ENCODE measurements at regions of chr3 and their contacts with region 1.

Region 1: DNA sequence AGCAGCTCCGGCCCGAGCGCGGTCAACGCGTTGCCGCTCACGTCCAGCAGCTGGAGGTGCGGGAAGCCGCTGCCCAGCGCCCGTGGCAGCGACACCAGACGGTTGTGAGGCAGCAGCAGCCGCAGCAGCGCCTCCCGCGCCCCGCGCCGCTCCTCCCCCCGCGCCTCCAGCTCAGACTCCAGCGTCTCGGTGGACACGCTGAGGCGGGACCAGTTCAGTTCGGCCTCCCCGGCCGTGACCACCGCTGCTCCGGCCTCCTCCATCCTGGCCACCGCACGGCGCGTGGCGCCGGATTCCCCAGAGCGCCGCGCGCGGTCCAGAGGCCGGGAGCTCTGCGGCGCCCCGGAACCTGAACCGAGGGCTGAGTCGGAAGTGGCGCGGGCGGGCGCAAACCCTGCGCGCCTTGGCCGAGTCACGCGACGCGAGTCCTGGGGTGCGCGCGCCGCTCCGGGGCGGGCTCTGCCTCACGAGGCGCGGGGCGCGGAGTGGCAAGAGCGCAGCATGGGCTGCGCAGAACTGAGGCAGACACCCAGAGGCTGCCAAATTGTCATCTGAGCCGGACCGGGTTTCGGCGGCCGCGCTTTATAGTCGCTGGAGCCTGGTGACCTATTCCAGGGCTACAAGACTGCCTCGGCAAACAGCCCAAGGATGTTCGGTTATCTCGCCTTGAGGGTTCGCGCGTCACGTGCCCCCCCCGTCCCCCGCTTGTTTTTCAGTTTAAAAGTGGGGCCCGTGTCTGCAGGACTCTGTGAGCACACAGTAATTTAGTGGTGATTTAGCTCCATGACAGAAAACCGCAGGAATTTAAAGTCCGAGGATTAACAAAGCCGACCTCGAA is at the start of gene LRRC58:
- DNase-seq: peak; percentile 87
- H3K4me3 Mint-ChIP-seq: peak within 1 kb of the TSS; percentile 92
- H3K27ac Mint-ChIP-seq: peak within 1 kb of the TSS; percentile 88
- H3K4me1 Mint-ChIP-seq: peaks cover 46% of the 10 kb centered on the region
- H3K27me3 Mint-ChIP-seq: peaks cover 26% of the 10 kb centered on the region
- total RNA-seq, gene LRRC58: 26.9 and 27.4 TPM in 2 replicates

Region 2: DNA sequence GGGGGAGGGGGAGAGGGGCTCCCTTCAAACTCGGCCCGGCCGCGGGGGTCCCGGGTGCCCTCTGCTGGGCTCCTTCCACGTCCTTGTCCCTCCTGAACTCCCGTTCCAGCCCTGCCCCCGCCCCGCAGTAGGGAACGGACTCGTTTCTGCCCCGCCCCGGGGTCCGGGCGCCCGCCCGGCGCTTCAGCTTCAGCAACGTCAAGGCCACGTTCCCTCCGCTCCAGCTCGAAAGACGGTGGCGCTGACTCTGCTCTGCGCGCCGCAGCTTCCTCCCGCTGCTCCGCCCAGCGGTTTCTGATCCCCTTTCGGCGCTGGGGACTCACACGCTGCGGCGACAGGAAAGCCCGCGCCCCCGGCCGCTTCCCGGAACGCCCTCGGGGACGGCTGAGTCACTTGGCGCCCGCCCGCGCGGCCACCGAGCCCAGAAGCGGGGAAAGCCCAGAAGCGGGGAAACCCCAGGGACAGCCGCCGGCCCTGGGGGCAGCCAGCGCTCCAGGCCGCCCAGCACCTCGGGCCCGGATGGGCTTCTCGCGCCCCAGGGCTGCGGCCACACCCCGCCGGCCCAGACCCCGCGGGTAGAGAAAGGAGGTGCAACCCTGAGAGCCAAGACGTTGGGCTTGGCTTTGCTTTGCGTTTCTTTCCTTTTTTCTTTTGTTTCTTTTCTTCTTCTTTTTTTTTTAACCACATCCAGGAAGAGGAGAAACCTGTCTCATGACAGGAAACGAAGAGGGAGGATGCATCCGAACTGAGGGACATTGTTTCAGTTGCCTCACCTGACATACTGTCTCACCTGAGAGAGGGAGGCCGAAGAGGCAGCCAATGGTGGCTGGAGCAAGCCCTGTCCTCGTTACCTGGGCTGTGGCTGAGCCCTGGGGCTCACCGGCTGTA is 1026.1 kb before region 1 on chr3:
- intact Hi-C with region 1: loop called (anchors 2 kb)
- DNase-seq: peak; percentile 92
- H3K4me3 Mint-ChIP-seq: peak overlapping the region; percentile 80
- H3K27ac Mint-ChIP-seq: peak overlapping the region; percentile 92
- H3K4me1 Mint-ChIP-seq: peaks cover 52% of the 10 kb centered on the region
- H3K27me3 Mint-ChIP-seq: peaks cover 27% of the 10 kb centered on the region

Region 3: DNA sequence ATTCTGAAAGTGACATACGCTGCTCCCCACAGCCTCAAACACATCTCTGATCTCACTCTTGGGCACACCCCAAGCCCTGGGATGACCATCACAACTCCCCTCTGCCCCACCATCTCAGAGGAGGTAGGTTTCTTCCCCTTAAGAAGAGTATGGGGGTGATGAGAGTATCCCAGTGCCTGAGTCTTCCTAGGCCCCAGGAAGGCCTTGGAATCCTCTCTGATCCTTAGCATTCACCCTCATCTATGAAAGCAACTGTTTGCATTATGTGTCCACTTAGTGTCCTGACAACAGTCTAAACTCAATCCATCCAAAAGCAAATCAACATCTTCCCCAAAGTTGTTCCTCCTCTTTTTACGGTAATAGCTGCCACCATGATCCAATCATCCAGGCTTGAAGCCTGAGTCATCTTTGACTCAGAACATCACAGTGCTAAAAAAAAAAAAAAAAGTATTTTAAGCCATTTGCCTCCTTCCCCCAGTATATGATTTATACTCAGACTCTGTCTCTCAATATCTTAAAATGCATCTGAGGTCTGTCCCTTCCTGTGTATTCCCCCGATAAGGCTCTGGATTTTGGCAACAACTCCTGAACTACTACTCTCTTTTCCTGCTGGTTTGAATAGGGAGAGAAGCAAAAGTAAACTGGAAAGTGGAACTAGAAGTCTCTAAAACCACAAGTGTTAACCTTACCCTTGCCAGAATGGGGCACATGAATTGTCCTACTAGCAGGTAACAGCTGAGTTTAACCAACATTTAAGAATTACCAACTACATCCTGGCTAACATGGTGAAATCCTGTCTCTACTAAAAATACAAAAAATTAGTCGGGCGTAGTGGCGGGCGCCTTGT is 711.3 kb before region 1 on chr3:
- intact Hi-C with region 1: loop called (anchors 2 kb)
- DNase-seq: no peak
- H3K4me3 Mint-ChIP-seq: peak overlapping the region; percentile 47
- H3K27ac Mint-ChIP-seq: peak overlapping the region; percentile 89
- H3K4me1 Mint-ChIP-seq: peaks cover 45% of the 10 kb centered on the region
- H3K27me3 Mint-ChIP-seq: peaks cover under 1% of the 10 kb centered on the region

Region 4: DNA sequence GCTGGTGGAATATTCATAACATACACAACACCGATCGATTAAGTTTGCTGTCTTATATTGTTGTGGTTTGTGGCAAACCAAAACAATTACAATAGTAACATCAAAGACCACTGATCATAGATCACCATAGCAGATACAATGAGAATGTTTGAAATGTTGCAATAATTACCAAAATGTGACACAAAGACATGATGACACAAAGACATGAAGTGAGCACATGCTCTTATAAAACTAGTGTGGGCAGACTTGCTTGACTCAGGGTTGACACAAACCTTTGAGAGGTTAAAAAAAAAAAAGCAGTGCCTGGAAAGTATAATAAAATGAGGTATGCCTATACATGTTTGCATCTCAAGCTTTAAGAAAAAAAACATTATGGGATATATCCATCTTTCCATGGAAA is 437.0 kb before region 1 on chr3:
- intact Hi-C with region 1: loop called (anchors 2 kb)
- DNase-seq: no peak
- H3K4me3 Mint-ChIP-seq: no peak overlapping the region
- H3K27ac Mint-ChIP-seq: peak overlapping the region; percentile 59
- H3K4me1 Mint-ChIP-seq: peaks cover 21% of the 10 kb centered on the region
- H3K27me3 Mint-ChIP-seq: peaks cover 1% of the 10 kb centered on the region

Region 5: DNA sequence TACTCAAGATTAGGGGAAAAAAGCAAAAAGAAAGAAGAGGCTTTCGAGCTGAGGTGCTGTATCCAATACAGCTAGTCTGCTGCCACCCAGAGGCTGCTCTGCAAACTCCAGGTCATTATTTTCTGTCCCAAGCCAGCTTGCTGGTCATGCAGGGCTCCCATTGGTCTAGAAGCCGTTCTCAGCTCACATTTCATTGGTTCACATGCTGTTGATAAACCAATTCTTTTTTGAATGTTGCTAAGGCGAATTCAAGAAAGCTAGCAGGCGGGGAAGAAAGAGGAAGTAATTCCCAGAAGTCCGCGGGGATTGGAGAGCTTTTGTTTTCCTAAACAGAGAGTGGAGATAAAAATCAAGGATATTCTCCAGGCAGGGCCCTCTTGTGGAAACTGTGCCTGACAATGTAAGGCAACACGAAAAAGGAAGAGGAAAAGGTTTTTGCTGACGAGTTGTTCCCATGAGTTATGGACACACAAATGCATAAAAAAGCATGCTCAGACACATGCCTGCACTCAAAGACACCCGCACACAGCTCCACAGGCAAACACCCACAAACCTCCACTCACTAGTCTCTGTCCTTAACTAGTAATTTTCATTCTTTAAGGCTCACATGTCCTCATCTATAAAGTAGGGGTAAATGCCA is 68.2 kb after region 1 on chr3:
- intact Hi-C with region 1: loop called (anchors 1 kb)
- DNase-seq: peak; percentile 78
- H3K4me3 Mint-ChIP-seq: peak overlapping the region; percentile 84
- H3K27ac Mint-ChIP-seq: no peak overlapping the region
- H3K4me1 Mint-ChIP-seq: peaks cover 22% of the 10 kb centered on the region
- H3K27me3 Mint-ChIP-seq: peaks cover 2% of the 10 kb centered on the region

Region 6: GRCh38 chr3:120742198-120742849 is 393.1 kb after region 1 on chr3 and contains the starts of genes GTF2E1 and RABL3:
- intact Hi-C with region 1: loop called (anchors 1 kb)
- DNase-seq: peak; percentile 95
- H3K4me3 Mint-ChIP-seq: peak within 1 kb of the TSS; percentile 84
- H3K27ac Mint-ChIP-seq: peak within 1 kb of the TSS; percentile 89
- H3K4me1 Mint-ChIP-seq: peaks cover 22% of the 10 kb centered on the region
- H3K27me3 Mint-ChIP-seq: no peaks in the 10 kb centered on the region
- total RNA-seq, gene GTF2E1: 25.3 and 29.2 TPM in 2 replicates
- total RNA-seq, gene RABL3: 24.3 and 25.6 TPM in 2 replicates

Measured in activated T-helper 1 cell treated with anti-CD3 and anti-CD28 coated beads, Interleukin-12 subunit alpha, Interleukin-12 subunit beta, Interleukin-2, Interleukin-4 antibody, amounts not matched to agents 30 ng/mL and 10 ng/mL and 1 ng/mL, durations not matched to agents 14 hours and 24 hours and 36 hours (primary cell).